ENCODE measurements at regions of chr1 and their contacts with region 1.

Region 1: DNA sequence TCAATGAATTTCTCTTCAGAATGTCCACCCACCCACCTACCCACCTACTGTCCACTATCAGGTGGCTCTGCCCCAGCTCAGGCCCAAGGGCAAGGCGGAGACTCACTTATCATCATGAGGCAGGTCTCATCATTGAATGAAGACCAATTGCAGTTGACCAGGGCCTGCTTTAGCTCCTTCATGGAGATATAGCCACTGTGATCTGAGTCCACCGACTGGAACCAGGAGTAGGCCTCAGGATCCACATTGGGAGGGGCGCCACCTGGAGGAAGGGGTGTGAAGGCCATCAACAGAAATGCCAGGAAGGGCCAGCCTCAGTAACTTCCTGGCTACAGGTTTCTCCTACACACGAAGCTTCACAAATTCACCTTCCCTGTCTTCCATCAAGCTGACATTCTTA is 11.6 kb downstream of the PEF1 start:
- DNase-seq: no peak
- ATAC-seq: no peak
- H3K4me3 Mint-ChIP-seq: no peak overlapping the region
- H3K27ac Mint-ChIP-seq: no peak overlapping the region
- H3K4me1 Mint-ChIP-seq: peaks cover 17% of the 10 kb centered on the region
- H3K27me3 Mint-ChIP-seq: no peaks in the 10 kb centered on the region
- CTCF ChIP-seq: no peak

Region 2: DNA sequence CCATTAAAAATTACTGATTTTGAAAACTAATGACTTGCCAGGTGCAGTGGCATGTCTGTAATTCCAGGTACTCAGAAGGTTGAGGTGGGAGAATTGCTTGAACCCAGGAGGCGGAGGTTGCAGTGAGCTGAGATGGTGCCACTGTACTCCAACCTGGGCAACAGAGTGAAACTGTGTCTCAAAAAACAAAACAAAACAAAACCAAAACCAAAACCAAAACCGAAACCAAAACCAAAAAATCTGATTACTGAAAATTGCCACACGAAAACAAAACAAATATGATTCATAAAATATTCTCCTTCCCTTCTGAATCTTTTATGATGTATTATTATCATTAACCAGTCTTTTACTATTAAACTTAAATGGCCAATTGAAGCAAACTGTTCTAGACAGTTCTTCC is 145.9 kb before region 1 on chr1:
- CTCF ChIA-PET with region 1: no interaction called
- POLR2A ChIA-PET with region 1: no interaction called
- intact Hi-C with region 1: no loop called
- DNase-seq: no peak
- ATAC-seq: no peak
- H3K4me3 Mint-ChIP-seq: no peak overlapping the region
- H3K27ac Mint-ChIP-seq: no peak overlapping the region
- H3K4me1 Mint-ChIP-seq: peaks cover 12% of the 10 kb centered on the region
- H3K27me3 Mint-ChIP-seq: peaks cover 3% of the 10 kb centered on the region
- CTCF ChIP-seq: no peak

Region 3: GRCh38 chr1:31505911-31506497 is 127.0 kb before region 1 on chr1:
- CTCF ChIA-PET with region 1: no interaction called
- POLR2A ChIA-PET with region 1: interaction called, 14 read pairs
- intact Hi-C with region 1: no loop called
- DNase-seq: no peak
- ATAC-seq: peak; percentile 47
- H3K4me3 Mint-ChIP-seq: no peak overlapping the region
- H3K27ac Mint-ChIP-seq: no peak overlapping the region
- H3K4me1 Mint-ChIP-seq: peaks cover 20% of the 10 kb centered on the region
- H3K27me3 Mint-ChIP-seq: peaks cover 6% of the 10 kb centered on the region
- CTCF ChIP-seq: no peak

Region 4: GRCh38 chr1:32773018-32773763 is 1140.1 kb after region 1 on chr1:
- CTCF ChIA-PET with region 1: no interaction called
- POLR2A ChIA-PET with region 1: no interaction called
- intact Hi-C with region 1: no loop called
- DNase-seq: peak; percentile 60
- ATAC-seq: peak; percentile 76
- H3K4me3 Mint-ChIP-seq: no peak overlapping the region
- H3K27ac Mint-ChIP-seq: no peak overlapping the region
- H3K4me1 Mint-ChIP-seq: no peaks in the 10 kb centered on the region
- H3K27me3 Mint-ChIP-seq: no peaks in the 10 kb centered on the region
- CTCF ChIP-seq: peak; percentile 45